ENCODE measurements at regions of chr9 and their contacts with region 1.

Region 1: GRCh38 chr9:21576331-21577189 is 94.4 kb upstream of the IFNE start:
- DNase-seq: peak; percentile 74
- ATAC-seq: peak; percentile 80
- H3K4me3 Mint-ChIP-seq: peak overlapping the region; percentile 34
- H3K27ac Mint-ChIP-seq: peak overlapping the region; percentile 66
- H3K4me1 Mint-ChIP-seq: peaks cover 34% of the 10 kb centered on the region
- H3K27me3 Mint-ChIP-seq: peaks cover 2% of the 10 kb centered on the region
- CTCF ChIP-seq: no peak

Region 2: DNA sequence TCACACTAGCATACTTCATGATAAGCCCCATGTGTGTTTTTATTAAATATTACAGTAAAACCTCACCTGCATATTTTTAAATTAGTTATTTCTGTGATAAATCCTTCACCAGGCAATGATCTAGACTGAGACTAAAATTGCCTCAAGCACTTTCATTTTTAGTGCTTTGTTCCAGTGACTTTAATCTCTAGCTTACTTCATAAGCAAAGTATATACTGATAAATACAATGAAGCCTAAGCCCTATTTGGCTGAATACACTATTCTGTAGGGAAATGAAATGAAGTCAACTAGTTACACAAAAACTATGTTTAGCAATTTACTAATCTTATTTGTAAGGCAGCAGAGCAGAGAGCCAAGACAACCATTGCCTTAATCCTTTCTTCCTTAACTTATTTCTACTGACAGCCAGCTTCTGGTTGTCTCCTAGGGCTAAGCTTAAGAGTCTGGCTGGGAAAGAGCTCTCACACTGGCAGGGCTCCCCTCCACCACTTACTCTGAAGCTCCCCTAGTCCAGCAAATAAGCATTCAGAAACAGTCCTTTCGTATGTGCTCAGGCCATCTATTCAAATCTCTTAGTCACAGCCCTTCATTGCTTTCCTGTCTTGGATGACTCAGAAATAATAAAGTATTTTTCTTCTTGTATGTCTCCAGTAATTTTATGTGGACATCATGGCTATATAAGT is 194.5 kb after region 1 on chr9:
- CTCF ChIA-PET with region 1: no interaction called
- POLR2A ChIA-PET with region 1: no interaction called
- intact Hi-C with region 1: loop called (anchors 10 kb)
- DNase-seq: no peak
- ATAC-seq: peak; percentile 58
- H3K4me3 Mint-ChIP-seq: no peak overlapping the region
- H3K27ac Mint-ChIP-seq: no peak overlapping the region
- H3K4me1 Mint-ChIP-seq: peaks cover 9% of the 10 kb centered on the region
- H3K27me3 Mint-ChIP-seq: peaks cover 1% of the 10 kb centered on the region
- CTCF ChIP-seq: no peak

Region 3: DNA sequence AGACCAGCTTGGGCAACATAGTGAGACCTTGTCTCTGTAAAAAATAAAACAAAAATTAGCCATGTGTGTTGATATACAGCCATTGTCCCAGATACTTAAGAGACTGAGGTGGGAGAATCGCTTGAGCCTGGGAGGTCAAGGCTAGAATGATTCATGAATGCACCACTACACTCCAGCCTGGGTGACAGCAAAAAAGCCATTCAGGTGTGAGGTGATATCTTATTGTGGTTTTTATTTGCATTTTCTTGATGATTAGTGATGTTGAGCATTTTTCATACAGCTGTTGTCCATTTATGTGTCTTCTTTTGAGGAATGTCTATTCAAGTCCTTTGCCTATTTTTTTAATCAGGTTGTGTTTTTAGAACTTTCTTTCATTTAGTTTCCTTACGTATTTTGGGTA is 249.1 kb after region 1 on chr9:
- CTCF ChIA-PET with region 1: no interaction called
- POLR2A ChIA-PET with region 1: no interaction called
- intact Hi-C with region 1: no loop called
- DNase-seq: no peak
- ATAC-seq: no peak
- H3K4me3 Mint-ChIP-seq: no peak overlapping the region
- H3K27ac Mint-ChIP-seq: no peak overlapping the region
- H3K4me1 Mint-ChIP-seq: peaks cover 33% of the 10 kb centered on the region
- H3K27me3 Mint-ChIP-seq: no peaks in the 10 kb centered on the region
- CTCF ChIP-seq: no peak